ENCODE measurements at regions of chr11 and their contacts with region 1.

Region 1: DNA sequence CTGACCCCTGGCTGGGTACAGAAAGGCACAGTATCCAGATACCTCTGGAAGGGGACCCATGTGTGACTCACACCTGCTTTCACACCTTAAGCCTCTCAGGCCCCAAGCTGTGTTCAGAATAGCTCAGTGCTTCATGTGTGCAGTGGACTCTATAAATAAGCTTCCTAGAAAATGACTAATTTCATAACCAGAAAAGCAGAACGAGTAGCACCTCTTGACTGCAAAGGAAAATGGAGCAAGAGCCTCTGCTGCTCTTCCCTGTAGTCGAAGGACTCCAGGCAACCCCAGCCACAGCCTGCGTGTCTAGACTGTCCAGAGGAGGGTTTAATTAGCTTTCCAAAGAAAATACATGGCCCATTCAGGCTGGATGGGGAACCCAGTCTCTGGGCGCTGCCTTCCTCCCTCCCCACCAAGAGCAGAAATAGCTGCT is 23.1 kb downstream of the PTPN5 start:
- DNase-seq: no peak
- H3K4me3 ChIP-seq: no peak overlapping the region
- H3K27ac ChIP-seq: no peak overlapping the region
- H3K4me1 ChIP-seq: peaks cover 0 to 15% (median 7%) of the 10 kb centered on the region in 4 experiments; a peak in 6 of 7 replicates
- H3K27me3 ChIP-seq: 0 out of 7 replicates have a peak, but pooled peaks cover 0 to 3% (median 0%) of the 10 kb centered on the region in 4 experiments
- CTCF ChIP-seq: no peak
- EP300 ChIP-seq: no peak
- POLR2A ChIP-seq: no peak
- RAD21 ChIP-seq: no peak

Region 2: GRCh38 chr11:18567081-18567480 is 201.4 kb before region 1 on chr11:
- CTCF ChIA-PET with region 1: no interaction called
- POLR2A ChIA-PET with region 1: no interaction called
- DNase-seq: no peak
- H3K4me3 ChIP-seq: no peak overlapping the region
- H3K27ac ChIP-seq: no peak overlapping the region
- H3K4me1 ChIP-seq: no peaks in the 10 kb centered on the region
- H3K27me3 ChIP-seq: no peaks in the 10 kb centered on the region
- CTCF ChIP-seq: no peak
- EP300 ChIP-seq: no peak
- POLR2A ChIP-seq: no peak
- RAD21 ChIP-seq: no peak

Region 3: GRCh38 chr11:18749697-18750319 is 18.7 kb before region 1 on chr11:
- CTCF ChIA-PET with region 1: interaction called, 244 read pairs
- POLR2A ChIA-PET with region 1: no interaction called
- DNase-seq: no peak
- H3K4me3 ChIP-seq: no peak overlapping the region
- H3K27ac ChIP-seq: no peak overlapping the region
- H3K4me1 ChIP-seq: peaks cover 0 to 8% (median 4%) of the 10 kb centered on the region in 4 experiments; a peak in 4 of 7 replicates
- H3K27me3 ChIP-seq: no peaks in the 10 kb centered on the region
- CTCF ChIP-seq: no peak
- EP300 ChIP-seq: no peak
- POLR2A ChIP-seq: no peak
- RAD21 ChIP-seq: no peak

Region 4: GRCh38 chr11:18802381-18803257 is 34.1 kb after region 1 on chr11:
- CTCF ChIA-PET with region 1: interaction called, 363 read pairs
- POLR2A ChIA-PET with region 1: no interaction called
- DNase-seq: peak in 1 of 2 experiments; percentile 54
- H3K4me3 ChIP-seq: no peak overlapping the region
- H3K27ac ChIP-seq: no peak overlapping the region
- H3K4me1 ChIP-seq: no peaks in the 10 kb centered on the region
- H3K27me3 ChIP-seq: no peaks in the 10 kb centered on the region
- CTCF ChIP-seq: peak; percentile 23 to 69 (median 61)
- EP300 ChIP-seq: no peak
- POLR2A ChIP-seq: no peak
- RAD21 ChIP-seq: peak; percentile 72 to 80